ENCODE measurements at regions of chrX and their contacts with region 1.

Region 1: DNA sequence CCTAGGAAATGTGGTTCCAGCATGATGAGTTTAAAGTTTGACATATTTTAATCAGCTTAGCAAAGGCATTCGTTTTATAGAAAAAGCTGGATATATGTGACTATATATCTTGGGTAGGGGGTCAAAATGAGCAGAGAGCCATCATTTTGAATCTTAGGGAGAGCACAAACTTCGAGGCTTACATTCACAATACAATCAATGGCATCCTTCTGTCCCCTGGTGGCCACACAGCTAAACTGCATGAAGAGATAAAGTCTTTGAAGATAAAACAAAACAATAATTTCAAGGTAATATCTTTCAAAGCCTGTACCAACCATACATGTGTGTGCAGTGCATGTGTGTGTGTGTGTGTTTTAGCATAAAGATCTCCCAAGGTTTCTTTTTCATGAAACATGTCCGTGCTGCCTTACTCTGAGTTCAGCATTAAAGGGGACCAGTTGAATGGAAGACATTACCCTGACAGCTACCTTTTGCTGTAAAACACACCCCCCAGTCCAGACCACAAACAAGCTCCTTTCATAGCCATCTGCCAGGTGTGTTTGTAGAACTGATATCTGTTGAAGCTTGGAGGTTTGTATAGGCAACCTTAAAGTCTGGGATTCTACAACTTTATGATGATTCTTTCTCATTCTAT is 22.0 kb downstream of the DYNLT3 start:
- DNase-seq: peak; percentile 17
- CTCF ChIP-seq: peak; percentile 78

Region 2: GRCh38 chrX:36407836-36408235 is 1417.5 kb before region 1 on chrX:
- CTCF ChIA-PET with region 1: no interaction called
- POLR2A ChIA-PET with region 1: no interaction called
- DNase-seq: no peak
- CTCF ChIP-seq: no peak

Region 3: DNA sequence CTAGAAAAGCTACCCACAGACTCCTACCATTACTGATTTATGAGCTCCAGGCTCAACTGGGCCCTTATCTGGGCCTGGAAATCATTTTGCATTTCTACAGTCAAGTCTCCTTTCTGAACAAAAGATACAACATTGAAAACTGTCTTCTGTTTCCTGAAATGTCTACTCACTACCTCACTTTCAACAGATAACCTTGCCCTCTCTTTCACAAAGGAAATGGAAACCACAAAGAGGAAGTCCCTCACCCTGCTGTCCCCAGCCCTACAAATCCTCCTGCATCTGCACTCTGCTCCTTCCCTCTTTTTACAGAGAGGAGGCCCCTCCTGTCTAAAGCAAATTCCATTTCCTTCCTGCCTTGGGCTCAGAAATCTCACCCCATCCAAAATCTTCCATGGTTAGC is 70.3 kb before region 1 on chrX:
- CTCF ChIA-PET with region 1: interaction called, 16 read pairs
- POLR2A ChIA-PET with region 1: no interaction called
- DNase-seq: peak; percentile 42
- CTCF ChIP-seq: no peak

Region 4: GRCh38 chrX:37763400-37763799 is 61.9 kb before region 1 on chrX:
- CTCF ChIA-PET with region 1: interaction called, 12 read pairs
- POLR2A ChIA-PET with region 1: no interaction called
- DNase-seq: no peak
- CTCF ChIP-seq: no peak

Region 5: GRCh38 chrX:37781814-37782213 is 43.5 kb before region 1 on chrX:
- CTCF ChIA-PET with region 1: interaction called, 10 read pairs
- POLR2A ChIA-PET with region 1: no interaction called
- DNase-seq: no peak
- CTCF ChIP-seq: no peak

Region 6: DNA sequence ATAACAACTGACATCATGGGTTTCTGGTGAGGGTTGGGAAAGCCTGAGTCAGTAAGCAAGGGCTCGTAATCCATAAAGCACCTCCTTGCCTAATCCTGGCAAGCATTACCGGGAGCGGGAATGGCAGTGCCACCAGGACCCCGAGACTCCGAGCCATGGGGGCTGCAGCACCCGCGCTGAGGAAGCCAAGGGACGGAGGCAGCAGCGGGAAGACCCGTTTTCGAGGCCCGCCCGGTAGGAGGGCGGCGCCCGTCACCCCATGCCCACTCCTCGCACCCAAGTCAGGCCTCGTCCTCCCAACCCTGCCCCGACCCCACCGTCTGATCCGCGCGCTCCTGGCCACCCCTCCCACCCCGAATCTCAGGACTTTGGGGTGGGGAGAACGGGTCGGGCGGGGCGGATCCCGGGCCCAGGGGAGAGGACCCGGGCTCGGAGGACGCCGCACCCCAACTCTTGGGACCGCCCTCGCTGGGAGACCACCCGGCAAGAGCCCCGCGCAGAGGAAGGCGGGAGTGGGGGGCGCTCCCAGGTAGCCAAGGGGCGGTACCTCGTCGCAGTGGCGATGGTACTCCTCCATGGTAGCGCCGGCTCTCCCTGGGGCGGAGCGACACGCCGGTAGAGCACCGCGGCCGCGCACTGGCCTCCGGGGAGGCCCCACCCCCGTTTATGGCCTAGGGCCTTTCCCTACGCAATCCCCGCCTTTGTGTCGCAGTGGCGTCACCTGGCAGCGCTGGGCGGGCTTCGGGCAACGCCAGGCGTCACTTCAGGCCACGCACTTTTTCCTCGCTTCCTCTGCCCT is 21.8 kb after region 1 on chrX and contains the start of gene DYNLT3:
- CTCF ChIA-PET with region 1: interaction called, 25 read pairs
- POLR2A ChIA-PET with region 1: no interaction called
- DNase-seq: peak; percentile 81
- CTCF ChIP-seq: no peak

Measured in GM10248 (cell line).